CD4-positive, alpha-beta memory T cell (primary cell): ENCODE measurements at regions of chr1 and their contacts with region 1.

Region 1: DNA sequence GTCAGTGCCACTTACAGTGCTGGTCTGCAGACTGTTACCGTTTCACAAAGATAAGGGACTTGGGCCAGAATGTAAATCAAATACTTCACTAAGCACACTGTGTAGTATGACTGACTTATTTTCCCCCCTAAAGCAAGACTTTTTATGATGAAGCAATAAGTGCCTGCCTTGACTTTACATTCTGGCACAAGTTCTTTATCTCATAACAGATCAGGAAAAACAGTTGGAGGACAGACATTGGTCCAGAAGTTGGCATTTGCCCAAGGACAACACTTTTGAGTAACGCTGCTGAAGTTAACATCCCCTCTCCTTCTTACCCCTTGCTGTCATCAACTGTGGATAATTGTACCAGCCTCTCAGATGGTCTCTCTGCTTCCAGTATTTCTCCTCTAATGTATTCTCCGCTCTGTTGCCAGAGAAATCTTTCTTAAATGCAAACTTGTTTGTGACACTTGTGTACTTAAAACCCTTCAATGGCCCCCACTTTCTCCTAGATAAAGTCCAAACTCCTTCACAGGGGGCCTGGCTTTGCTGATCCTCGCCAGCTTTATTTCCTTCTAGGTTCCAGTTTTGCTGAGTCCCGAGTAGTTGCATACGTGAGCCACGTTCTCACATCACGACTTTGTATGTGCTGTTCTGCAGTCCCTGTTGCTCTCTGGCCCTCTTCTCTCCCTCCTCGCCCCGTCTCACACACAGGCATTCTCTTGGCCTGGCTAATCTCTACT is 45.7 kb downstream of the S1PR1 start:
- DNase-seq: no peak
- H3K4me3 ChIP-seq: no peak overlapping the region
- H3K4me3 Mint-ChIP-seq: peak overlapping the region in 5 of 8 donors; percentile 8 to 80 (median 51)
- H3K27ac ChIP-seq: peak overlapping the region; percentile 66
- H3K27ac Mint-ChIP-seq: peak overlapping the region; percentile 89 to 98 (median 95)
- H3K4me1 ChIP-seq: peaks cover 99% of the 10 kb centered on the region
- H3K4me1 Mint-ChIP-seq: peaks cover 84 to 95% (median 90%) of the 10 kb centered on the region in 4 donors
- H3K27me3 ChIP-seq: no peaks in the 10 kb centered on the region
- H3K27me3 Mint-ChIP-seq: no peaks in the 10 kb centered on the region

Region 2: DNA sequence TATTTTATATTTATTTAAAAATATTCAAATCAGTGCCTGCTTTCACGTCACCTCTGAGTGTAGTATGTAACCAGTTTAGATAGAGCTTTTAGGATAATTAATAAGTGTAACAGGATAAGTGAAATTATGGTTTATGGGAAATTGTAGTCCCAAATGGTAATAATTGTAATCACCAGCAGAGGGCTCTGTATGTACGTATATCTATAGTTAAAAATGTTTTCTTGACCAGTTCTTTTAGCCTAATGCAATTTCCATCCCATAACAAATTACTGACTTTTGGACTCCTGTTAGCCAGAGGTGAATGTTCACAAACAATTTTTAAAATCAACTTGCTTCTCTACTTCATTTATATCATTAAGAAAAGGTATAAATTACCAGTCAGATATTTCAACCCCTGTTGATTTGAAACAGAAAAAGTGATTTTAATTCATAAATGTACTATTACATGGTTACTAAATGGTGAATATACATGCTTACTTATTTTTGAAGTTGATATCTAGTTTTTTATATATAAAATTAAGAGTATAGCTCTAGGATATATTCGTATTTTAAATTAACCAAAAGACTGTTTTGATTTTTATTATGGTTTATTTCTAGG is 361.3 kb before region 1 on chr1:
- CTCF ChIA-PET with region 1: interaction called, 133 read pairs
- POLR2A ChIA-PET with region 1: interaction called, 15 read pairs
- intact Hi-C with region 1: no loop called
- DNase-seq: peak in 4 of 5 donors; percentile 48 to 66 (median 60)
- H3K4me3 ChIP-seq: no peak overlapping the region
- H3K4me3 Mint-ChIP-seq: peak overlapping the region in 3 of 8 donors; percentile 24 to 67 (median 39)
- H3K27ac ChIP-seq: no peak overlapping the region
- H3K27ac Mint-ChIP-seq: peak overlapping the region; percentile 61 to 91 (median 82)
- H3K4me1 ChIP-seq: peaks cover 39% of the 10 kb centered on the region
- H3K4me1 Mint-ChIP-seq: peaks cover 25 to 61% (median 38%) of the 10 kb centered on the region in 4 donors
- H3K27me3 ChIP-seq: no peaks in the 10 kb centered on the region
- H3K27me3 Mint-ChIP-seq: no peaks in the 10 kb centered on the region

Region 3: DNA sequence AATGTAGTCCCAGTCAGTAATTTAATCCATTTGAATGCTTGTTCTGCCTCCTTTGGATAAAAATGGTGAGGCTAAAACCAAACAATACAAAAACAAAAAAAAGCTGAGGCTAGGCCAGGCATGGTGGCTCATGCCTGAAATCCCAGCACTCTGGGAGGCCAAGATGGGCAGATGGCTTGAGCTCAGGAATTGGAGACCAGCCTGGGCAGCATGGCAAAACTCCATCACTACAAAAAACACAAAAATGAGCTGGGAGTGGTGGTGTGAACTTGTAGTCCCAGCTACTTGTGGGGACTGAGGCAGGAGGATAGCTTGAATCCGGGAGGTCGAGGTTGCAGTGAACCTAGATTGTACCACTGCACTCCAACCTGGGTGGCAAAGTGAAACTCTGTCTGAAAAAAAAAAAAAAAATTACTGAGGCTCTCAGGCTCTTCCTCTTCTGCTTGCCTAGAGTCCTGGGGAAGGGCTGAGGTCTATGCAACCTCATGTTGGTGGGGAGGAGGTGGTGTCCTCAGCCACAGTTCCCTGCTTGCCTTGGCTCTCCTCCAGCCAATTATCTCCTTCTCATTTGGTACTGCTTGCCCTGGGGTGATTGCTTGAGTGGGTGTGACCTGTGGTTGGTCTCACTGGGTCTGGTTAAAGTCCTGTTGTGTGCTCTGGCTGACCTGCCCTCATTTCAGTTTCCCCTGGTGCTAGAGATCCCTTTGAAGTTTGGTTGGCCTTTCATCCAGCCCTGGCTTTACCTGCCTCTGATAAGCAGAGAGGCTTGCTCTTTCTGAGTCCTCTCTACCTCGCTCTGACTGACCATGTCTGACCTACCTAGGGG is 24.8 kb before region 1 on chr1:
- CTCF ChIA-PET with region 1: interaction called, 112 read pairs
- POLR2A ChIA-PET with region 1: interaction called, 955 read pairs
- intact Hi-C with region 1: no loop called
- DNase-seq: peak; percentile 48 to 68 (median 56)
- H3K4me3 ChIP-seq: no peak overlapping the region
- H3K4me3 Mint-ChIP-seq: peak overlapping the region; percentile 26 to 78 (median 70)
- H3K27ac ChIP-seq: peak overlapping the region; percentile 8
- H3K27ac Mint-ChIP-seq: peak overlapping the region; percentile 73 to 92 (median 88)
- H3K4me1 ChIP-seq: peaks cover 58% of the 10 kb centered on the region
- H3K4me1 Mint-ChIP-seq: peaks cover 54 to 72% (median 65%) of the 10 kb centered on the region in 4 donors
- H3K27me3 ChIP-seq: no peaks in the 10 kb centered on the region
- H3K27me3 Mint-ChIP-seq: no peaks in the 10 kb centered on the region

Region 4: DNA sequence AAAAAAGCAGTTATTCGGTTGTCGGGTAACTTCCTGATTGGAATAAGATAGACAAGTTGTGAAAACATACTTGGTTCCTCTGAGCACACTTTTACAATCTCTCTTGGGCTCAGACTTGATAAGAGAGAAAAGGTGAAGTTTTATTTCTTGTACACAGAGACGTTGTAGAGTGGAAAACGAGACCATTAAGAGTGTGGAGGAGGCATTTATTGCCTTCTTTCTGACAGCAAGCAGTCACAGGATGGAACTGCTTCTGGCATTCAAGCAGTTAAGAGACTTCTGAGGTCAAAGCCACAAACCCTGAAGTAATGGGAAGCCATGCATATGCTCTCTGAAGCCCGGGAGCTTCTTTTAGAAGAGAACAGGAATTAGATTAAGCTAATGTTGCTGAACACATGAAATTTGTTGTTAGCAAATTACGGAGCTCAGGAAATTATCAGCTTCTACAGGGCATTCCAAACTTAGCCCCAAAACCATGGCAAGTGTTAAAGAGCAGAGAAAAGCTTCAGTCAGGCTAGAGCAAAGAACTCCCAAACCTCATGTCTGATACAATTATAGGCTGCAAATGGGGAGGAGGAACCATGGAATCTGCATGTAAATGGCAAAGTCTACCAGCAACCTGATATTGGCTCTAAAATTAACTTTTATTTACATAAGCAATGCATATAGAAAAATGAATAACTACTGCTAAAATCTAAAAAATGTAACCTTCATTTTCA is 19.7 kb before region 1 on chr1:
- CTCF ChIA-PET with region 1: interaction called, 112 read pairs
- POLR2A ChIA-PET with region 1: interaction called, 74 read pairs
- intact Hi-C with region 1: loop called (anchors 1 kb)
- DNase-seq: peak; percentile 52 to 65 (median 57)
- H3K4me3 ChIP-seq: peak overlapping the region in 1 of 2 donors; percentile 23
- H3K4me3 Mint-ChIP-seq: peak overlapping the region; percentile 76 to 88 (median 80)
- H3K27ac ChIP-seq: peak overlapping the region; percentile 41
- H3K27ac Mint-ChIP-seq: peak overlapping the region; percentile 62 to 93 (median 92)
- H3K4me1 ChIP-seq: peaks cover 99% of the 10 kb centered on the region
- H3K4me1 Mint-ChIP-seq: peaks cover 73 to 91% (median 81%) of the 10 kb centered on the region in 4 donors
- H3K27me3 ChIP-seq: no peaks in the 10 kb centered on the region
- H3K27me3 Mint-ChIP-seq: no peaks in the 10 kb centered on the region

Region 5: DNA sequence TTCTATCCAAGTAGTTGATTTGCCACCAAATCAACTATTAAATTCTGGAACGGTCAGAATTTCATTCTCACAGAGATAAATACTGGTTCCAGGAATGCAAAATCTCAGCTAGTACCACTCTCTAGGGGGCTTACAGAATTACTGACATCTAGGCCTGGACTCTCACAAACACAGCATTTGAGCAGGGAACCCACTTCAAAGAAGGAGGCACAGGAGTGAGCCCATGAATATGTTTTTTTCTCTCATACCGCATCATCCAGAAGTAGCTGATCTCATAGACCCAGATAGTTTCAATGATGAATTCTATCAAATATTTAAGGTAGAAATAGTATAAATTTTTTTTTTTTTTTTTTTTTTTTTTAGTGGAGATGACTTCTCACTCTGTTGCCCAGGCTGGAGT is 13.6 kb before region 1 on chr1:
- CTCF ChIA-PET with region 1: interaction called, 112 read pairs
- POLR2A ChIA-PET with region 1: interaction called, 74 read pairs
- intact Hi-C with region 1: loop called (anchors 1 kb)
- DNase-seq: no peak
- H3K4me3 ChIP-seq: no peak overlapping the region
- H3K4me3 Mint-ChIP-seq: no peak overlapping the region
- H3K27ac ChIP-seq: no peak overlapping the region
- H3K27ac Mint-ChIP-seq: peak overlapping the region in 2 of 7 donors; percentile 15 to 25
- H3K4me1 ChIP-seq: peaks cover 45% of the 10 kb centered on the region
- H3K4me1 Mint-ChIP-seq: peaks cover 39 to 65% (median 48%) of the 10 kb centered on the region in 4 donors
- H3K27me3 ChIP-seq: no peaks in the 10 kb centered on the region
- H3K27me3 Mint-ChIP-seq: no peaks in the 10 kb centered on the region